Endothelial cell of umbilical vein (primary cell): ENCODE measurements at regions of chr5 and their contacts with region 1.

Region 1: GRCh38 chr5:134845852-134846640 is at the start of gene C5orf24:
- DNase-seq: peak; percentile 98
- H3K4me3 ChIP-seq: peak within 1 kb of the TSS; percentile 78 to 97 (median 82)
- H3K27ac ChIP-seq: peak within 1 kb of the TSS; percentile 90
- H3K4me1 ChIP-seq: peaks cover 37% of the 10 kb centered on the region
- H3K27me3 ChIP-seq: no peaks in the 10 kb centered on the region
- CTCF ChIP-seq: no peak
- POLR2A ChIP-seq: peak; percentile 97
- total RNA-seq, gene C5orf24: 56.0 and 56.2 TPM in 2 replicates

Region 2: DNA sequence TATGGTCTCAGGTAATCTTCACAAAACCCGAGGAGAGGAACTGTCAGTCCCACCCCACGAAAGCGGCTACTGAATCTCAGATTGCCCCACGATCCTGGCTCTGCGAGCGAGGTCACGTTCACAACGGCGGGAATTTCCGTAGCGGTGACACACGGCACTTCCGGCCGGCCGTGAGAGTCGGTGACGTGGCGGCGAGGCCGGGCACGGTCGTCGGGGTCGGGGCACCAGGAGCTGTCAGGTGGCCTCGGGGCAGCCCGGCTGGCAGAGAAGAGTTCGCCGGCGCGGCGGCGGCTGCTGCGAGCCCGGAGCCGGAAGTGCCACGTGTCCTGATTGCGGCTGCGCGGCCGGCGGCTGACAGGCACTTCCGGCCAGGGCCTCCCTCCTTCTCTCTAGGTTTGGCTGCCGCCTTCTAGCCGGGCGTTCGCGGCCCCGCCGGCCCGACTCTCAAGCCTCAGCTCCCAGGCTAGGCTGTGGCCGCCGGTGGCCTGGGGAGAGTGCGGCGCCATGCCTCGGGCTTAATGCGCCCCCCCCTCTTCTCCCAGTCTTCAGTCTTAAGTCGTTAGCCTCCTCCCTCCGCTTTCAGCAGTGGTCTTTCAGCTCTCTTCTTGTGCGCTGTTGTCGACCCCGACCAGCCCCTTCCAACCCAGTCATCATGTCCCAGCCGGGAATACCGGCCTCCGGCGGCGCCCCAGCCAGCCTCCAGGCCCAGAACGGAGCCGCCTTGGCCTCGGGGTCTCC is 197.5 kb before region 1 on chr5 and contains the start of gene SEC24A:
- CTCF ChIA-PET with region 1: no interaction called
- POLR2A ChIA-PET with region 1: no interaction called
- dilution Hi-C with region 1: no loop called
- intact Hi-C with region 1: loop called (anchors 5 kb)
- DNase-seq: peak; percentile 93
- H3K4me3 ChIP-seq: peak within 1 kb of the TSS; percentile 60 to 91 (median 73)
- H3K27ac ChIP-seq: peak within 1 kb of the TSS; percentile 94
- H3K4me1 ChIP-seq: peaks cover 9% of the 10 kb centered on the region
- H3K27me3 ChIP-seq: no peaks in the 10 kb centered on the region
- CTCF ChIP-seq: no peak
- POLR2A ChIP-seq: peak; percentile 91
- total RNA-seq, gene SEC24A: 28.6 and 30.0 TPM in 2 replicates

Region 3: GRCh38 chr5:134784241-134784920 is 61.7 kb before region 1 on chr5:
- CTCF ChIA-PET with region 1: interaction called, 3 read pairs
- POLR2A ChIA-PET with region 1: no interaction called
- dilution Hi-C with region 1: no loop called
- intact Hi-C with region 1: loop called (anchors 5 kb)
- DNase-seq: peak; percentile 22
- H3K4me3 ChIP-seq: no peak overlapping the region
- H3K27ac ChIP-seq: peak overlapping the region; percentile 33
- H3K4me1 ChIP-seq: peaks cover 3% of the 10 kb centered on the region
- H3K27me3 ChIP-seq: no peaks in the 10 kb centered on the region
- CTCF ChIP-seq: no peak
- POLR2A ChIP-seq: no peak

Region 4: GRCh38 chr5:134873987-134874830 is 28.2 kb after region 1 on chr5 and contains the start of gene TXNDC15:
- CTCF ChIA-PET with region 1: interaction called, 5 read pairs
- POLR2A ChIA-PET with region 1: interaction called, 4 read pairs
- dilution Hi-C with region 1: no loop called
- intact Hi-C with region 1: loop called (anchors 1 kb)
- DNase-seq: peak; percentile 89
- H3K4me3 ChIP-seq: peak within 1 kb of the TSS; percentile 54 to 95 (median 80)
- H3K27ac ChIP-seq: peak within 1 kb of the TSS; percentile 60
- H3K4me1 ChIP-seq: peaks cover 3% of the 10 kb centered on the region
- H3K27me3 ChIP-seq: no peaks in the 10 kb centered on the region
- CTCF ChIP-seq: no peak
- POLR2A ChIP-seq: peak; percentile 89
- total RNA-seq, gene TXNDC15: 49.7 and 68.6 TPM in 2 replicates

Region 5: DNA sequence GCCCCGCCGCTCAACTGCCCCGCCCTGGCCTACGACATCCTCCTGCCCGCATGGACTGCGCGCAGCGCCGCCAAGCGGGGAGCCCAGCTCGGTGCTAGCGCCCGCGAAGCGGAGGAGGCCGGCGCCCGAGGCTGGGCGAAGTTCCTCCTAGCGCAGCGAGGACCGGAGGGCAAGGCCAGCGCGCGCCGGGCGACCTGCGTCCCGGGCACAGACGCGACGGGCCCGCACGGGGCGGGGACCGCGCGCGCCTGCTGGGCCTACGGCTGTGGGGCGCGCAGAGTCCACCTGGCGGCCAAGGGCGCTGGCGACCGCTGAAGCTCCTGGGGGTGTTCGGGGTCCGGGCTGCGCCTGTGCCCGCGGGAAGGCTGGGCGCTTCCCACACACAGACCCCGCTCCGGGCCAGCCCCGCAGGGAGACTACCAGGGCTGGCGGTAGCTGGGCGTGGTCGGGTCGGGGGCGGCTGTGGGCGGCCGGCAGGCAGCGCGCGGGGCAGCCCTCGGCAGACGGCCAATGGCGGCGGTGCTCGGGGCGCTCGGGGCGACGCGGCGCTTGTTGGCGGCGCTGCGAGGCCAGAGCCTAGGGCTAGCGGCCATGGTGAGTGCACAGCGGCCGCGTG is 58.7 kb after region 1 on chr5 and contains the start of gene PCBD2:
- CTCF ChIA-PET with region 1: interaction called, 11 read pairs
- POLR2A ChIA-PET with region 1: interaction called, 6 read pairs
- dilution Hi-C with region 1: no loop called
- intact Hi-C with region 1: loop called (anchors 1 kb)
- DNase-seq: peak; percentile 90
- H3K4me3 ChIP-seq: peak within 1 kb of the TSS; percentile 66 to 71 (median 69)
- H3K27ac ChIP-seq: peak within 1 kb of the TSS; percentile 85
- H3K4me1 ChIP-seq: no peaks in the 10 kb centered on the region
- H3K27me3 ChIP-seq: no peaks in the 10 kb centered on the region
- CTCF ChIP-seq: peak; percentile 95 to 96
- POLR2A ChIP-seq: peak; percentile 79
- total RNA-seq, gene PCBD2: 10.0 and 10.7 TPM in 2 replicates